ENCODE measurements at regions of chr10 and their contacts with region 1.

Region 1: DNA sequence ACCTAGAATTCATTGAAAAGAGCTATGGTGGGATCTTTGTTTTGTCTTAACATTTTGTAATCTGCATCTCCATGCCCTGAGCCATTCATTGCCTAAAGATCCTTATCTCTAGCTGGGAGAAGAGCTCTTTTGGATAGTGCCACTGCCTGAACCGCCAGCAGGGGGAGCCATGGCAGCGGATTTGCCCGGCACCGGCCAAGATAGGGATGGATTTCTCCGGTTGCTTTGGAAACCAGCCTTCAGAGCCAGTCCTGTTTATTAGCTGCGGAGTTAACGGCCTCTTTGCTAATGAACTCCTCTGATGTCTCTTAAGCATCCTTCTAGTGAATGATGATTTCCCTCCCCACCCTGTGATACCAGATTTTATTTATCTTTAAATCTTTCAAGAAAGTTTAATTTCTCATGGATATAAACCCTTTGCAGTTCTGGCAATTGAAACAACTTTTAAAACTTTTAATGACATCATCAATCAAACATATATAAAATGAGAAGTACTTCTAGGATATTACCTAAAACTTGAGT is 58.2 kb upstream of the LYZL2 start:
- DNase-seq: peak; percentile 81
- H3K4me3 Mint-ChIP-seq: no peak overlapping the region
- H3K27ac Mint-ChIP-seq: peak overlapping the region; percentile 1
- H3K4me1 Mint-ChIP-seq: peaks cover 44% of the 10 kb centered on the region
- H3K27me3 Mint-ChIP-seq: no peaks in the 10 kb centered on the region

Region 2: GRCh38 chr10:30701451-30702173 is 13.9 kb after region 1 on chr10:
- CTCF ChIA-PET with region 1: interaction called, 35 read pairs
- POLR2A ChIA-PET with region 1: no interaction called
- DNase-seq: peak; percentile 76
- H3K4me3 Mint-ChIP-seq: peak overlapping the region; percentile 77
- H3K27ac Mint-ChIP-seq: peak overlapping the region; percentile 99
- H3K4me1 Mint-ChIP-seq: peaks cover 85% of the 10 kb centered on the region
- H3K27me3 Mint-ChIP-seq: no peaks in the 10 kb centered on the region

Region 3: GRCh38 chr10:30709229-30709628 is 21.5 kb after region 1 on chr10:
- CTCF ChIA-PET with region 1: interaction called, 35 read pairs
- POLR2A ChIA-PET with region 1: no interaction called
- DNase-seq: no peak
- H3K4me3 Mint-ChIP-seq: no peak overlapping the region
- H3K27ac Mint-ChIP-seq: no peak overlapping the region
- H3K4me1 Mint-ChIP-seq: peaks cover 28% of the 10 kb centered on the region
- H3K27me3 Mint-ChIP-seq: no peaks in the 10 kb centered on the region

Measured in activated CD4-positive, alpha-beta T cell treated with anti-CD3 and anti-CD28 coated beads, Interleukin-2, amount 10 ng/mL, durations not matched to agents 7 days and 5 days (primary cell).